Activated T-helper 1 cell treated with anti-CD3 and anti-CD28 coated beads, Interleukin-12 subunit alpha, Interleukin-12 subunit beta, Interleukin-2, Interleukin-4 antibody, amounts not matched to agents 30 ng/mL and 10 ng/mL and 1 ng/mL, durations not matched to agents 14 hours and 24 hours and 36 hours (primary cell): ENCODE measurements at regions of chr1 and their contacts with region 1.

Region 1: DNA sequence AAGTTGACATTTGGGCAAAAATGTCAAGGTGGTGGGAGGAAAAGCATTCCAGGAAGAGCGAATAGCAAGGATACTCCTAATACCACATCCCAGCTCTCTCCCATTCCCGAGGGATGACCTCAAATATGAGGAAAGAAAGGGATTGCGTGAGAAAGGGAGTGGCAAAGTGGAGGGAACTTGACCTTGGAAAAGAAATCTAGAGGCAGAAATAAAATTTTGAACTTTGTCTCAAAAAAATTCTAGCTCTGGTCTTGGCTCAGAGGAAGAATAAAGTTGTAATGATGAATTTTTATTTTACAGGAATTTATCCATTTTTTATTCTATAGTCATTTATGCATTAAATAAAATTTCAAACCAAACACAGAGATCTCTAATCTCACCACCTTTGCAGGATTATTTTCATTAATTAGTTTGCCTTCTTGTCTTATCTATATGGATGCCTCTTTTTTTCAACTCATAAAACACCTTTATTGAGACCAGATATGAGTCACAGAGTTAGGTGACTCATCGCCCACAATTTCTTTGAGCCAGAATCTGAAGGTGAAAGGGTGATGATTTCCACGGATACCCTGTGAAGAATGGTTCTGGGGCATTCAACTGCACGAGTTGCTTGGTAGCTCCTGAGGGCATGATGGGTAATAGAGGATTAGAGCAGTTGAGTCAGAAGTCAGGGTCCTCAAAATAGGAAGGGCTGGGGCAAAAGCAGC is 128.0 kb downstream of the TBX19 start:
- DNase-seq: peak; percentile 64
- H3K4me3 Mint-ChIP-seq: peak overlapping the region; percentile 24
- H3K27ac Mint-ChIP-seq: peak overlapping the region; percentile 86
- H3K4me1 Mint-ChIP-seq: peaks cover 42% of the 10 kb centered on the region
- H3K27me3 Mint-ChIP-seq: no peaks in the 10 kb centered on the region

Region 2: DNA sequence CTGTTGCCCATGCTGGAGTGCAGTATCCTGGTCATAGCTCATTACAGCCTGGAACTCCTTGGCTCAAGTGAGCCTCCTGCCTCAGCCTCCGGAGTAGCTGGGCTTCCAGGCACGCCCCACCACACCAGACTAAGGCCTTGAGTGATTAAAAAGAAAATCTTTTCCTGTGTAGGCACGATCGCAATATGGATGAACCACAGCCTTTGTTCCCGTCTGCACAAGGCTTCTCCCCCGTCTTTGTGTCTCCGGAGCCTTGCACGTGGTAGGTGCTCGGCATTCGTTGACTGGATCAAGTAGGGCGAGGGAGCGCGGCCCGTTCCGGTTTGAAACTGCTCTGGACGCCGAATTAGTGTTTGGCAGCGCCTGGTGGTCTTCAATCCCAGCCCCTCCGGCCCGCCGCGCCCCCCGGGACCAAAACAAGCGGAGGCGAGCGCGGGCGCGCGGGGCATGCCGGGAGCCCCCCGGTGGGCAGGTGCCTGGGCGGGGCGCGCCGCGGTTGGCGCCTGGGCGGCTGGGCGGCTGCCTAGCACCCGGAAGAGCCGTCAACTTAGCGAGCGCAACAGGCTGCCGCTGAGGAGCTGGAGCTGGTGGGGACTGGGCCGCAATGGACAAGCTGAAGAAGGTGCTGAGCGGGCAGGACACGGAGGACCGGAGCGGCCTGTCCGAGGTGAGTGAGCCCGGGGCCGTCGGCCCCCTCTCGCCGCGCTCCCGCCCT is 183.1 kb before region 1 on chr1 and contains the start of gene SFT2D2:
- intact Hi-C with region 1: loop called (anchors 2 kb)
- DNase-seq: peak; percentile 77
- H3K4me3 Mint-ChIP-seq: peak within 1 kb of the TSS; percentile 90
- H3K27ac Mint-ChIP-seq: peak within 1 kb of the TSS; percentile 87
- H3K4me1 Mint-ChIP-seq: peaks cover 61% of the 10 kb centered on the region
- H3K27me3 Mint-ChIP-seq: peaks cover 4% of the 10 kb centered on the region
- total RNA-seq, gene SFT2D2: 71.1 and 76.5 TPM in 2 replicates

Region 3: GRCh38 chr1:168386949-168387586 is 21.6 kb before region 1 on chr1:
- intact Hi-C with region 1: loop called (anchors 1 kb)
- DNase-seq: peak; percentile 52
- H3K4me3 Mint-ChIP-seq: peak overlapping the region; percentile 51
- H3K27ac Mint-ChIP-seq: peak overlapping the region; percentile 67
- H3K4me1 Mint-ChIP-seq: peaks cover 21% of the 10 kb centered on the region
- H3K27me3 Mint-ChIP-seq: peaks cover 25% of the 10 kb centered on the region

Region 4: DNA sequence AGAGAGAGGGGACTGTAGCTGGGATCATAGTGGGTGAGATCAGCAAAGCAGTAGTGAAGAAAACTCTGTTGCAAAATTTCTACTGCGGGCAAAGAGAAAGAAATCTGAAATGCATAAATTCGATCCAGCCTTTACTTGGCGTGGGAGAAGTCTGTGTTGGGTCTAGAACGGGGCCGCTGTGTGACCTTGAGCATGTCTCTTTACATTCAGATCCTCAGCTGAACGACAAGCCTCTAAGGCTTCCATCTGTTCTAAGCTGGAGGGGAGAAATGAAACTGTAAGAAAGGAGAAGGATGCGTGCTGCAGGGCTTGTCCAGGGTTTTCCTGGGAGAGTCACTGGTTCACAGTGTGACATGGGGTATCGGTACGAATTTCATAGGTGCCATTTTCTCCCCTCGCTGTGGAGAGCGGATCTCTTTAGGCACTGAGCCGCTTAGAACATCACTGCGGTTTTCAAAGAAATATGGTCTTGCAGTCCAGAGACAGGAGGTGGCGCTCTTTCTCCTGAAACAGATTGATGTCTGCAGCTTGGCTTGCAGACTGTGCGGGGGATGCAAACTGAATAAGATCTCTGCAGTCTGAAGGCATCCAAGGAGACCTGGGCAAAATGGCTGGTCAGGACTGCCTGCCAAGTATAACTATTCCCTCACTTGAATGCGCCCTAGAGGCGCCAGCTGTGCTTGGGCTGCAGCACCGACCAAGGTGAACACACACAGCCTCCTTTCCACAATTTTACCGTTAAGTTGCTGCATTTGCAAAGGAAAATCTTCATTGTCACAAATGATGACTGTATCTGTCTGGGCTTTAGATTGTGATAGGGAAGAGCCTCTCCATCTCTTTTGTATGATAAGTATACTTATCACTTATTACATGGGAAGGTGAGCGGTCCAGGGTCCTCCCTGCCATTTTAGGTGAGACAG is 31.0 kb after region 1 on chr1:
- intact Hi-C with region 1: loop called (anchors 2 kb)
- DNase-seq: peak; percentile 78
- H3K4me3 Mint-ChIP-seq: peak overlapping the region; percentile 57
- H3K27ac Mint-ChIP-seq: no peak overlapping the region
- H3K4me1 Mint-ChIP-seq: peaks cover 52% of the 10 kb centered on the region
- H3K27me3 Mint-ChIP-seq: no peaks in the 10 kb centered on the region

Region 5: GRCh38 chr1:168452329-168452728 is 43.6 kb after region 1 on chr1:
- intact Hi-C with region 1: no loop called
- DNase-seq: no peak
- H3K4me3 Mint-ChIP-seq: no peak overlapping the region
- H3K27ac Mint-ChIP-seq: no peak overlapping the region
- H3K4me1 Mint-ChIP-seq: peaks cover 16% of the 10 kb centered on the region
- H3K27me3 Mint-ChIP-seq: peaks cover 2% of the 10 kb centered on the region

Region 6: DNA sequence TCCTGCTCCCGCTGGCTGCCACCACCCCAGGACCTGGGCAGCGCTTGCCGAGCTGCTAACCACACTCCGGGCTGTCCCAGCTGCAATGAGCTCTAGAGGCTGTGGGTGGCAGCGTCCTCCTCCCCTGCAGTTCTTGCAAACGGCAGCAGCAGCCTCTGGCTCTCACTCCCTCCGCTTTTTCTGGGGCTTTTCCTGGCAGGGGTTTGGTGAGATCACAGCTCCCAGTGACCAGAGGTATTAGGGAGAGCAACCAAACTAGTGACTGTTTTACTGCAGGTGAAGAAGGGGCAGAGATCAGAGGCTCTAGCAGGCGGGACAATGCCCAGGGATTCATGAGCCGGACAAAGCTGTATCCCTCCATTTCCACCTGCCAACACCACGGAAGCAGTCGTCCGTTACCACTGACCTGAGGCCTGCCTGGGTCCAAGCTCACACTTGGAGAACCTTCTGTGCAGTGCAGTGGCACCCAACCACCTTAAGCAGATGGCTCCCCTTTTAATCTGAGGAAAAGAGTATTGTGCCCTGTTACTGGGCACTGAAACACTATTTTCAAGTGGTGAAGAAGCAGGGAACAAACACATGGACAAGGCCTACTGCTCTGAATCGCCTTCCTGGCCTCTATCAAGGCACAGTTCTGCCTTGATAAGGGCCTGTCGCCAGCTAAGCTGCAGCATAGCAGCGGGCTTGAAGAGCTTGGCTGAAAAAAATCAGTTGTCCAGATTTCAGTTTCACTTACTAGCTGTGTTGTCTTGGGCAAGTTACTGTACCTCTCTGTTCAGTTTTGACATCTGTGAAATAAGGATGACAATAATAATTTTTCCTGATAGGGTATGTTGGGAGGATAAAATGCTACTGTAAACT is 1177.9 kb after region 1 on chr1 and contains the start of gene F5:
- intact Hi-C with region 1: loop called (anchors 10 kb)
- DNase-seq: peak; percentile 71
- H3K4me3 Mint-ChIP-seq: peak within 1 kb of the TSS; percentile 96
- H3K27ac Mint-ChIP-seq: peak within 1 kb of the TSS; percentile 91
- H3K4me1 Mint-ChIP-seq: peaks cover 81% of the 10 kb centered on the region
- H3K27me3 Mint-ChIP-seq: no peaks in the 10 kb centered on the region
- total RNA-seq, gene F5: 58.0 and 58.2 TPM in 2 replicates